ENCODE measurements at regions of chr17 and their contacts with region 1.

Region 1: DNA sequence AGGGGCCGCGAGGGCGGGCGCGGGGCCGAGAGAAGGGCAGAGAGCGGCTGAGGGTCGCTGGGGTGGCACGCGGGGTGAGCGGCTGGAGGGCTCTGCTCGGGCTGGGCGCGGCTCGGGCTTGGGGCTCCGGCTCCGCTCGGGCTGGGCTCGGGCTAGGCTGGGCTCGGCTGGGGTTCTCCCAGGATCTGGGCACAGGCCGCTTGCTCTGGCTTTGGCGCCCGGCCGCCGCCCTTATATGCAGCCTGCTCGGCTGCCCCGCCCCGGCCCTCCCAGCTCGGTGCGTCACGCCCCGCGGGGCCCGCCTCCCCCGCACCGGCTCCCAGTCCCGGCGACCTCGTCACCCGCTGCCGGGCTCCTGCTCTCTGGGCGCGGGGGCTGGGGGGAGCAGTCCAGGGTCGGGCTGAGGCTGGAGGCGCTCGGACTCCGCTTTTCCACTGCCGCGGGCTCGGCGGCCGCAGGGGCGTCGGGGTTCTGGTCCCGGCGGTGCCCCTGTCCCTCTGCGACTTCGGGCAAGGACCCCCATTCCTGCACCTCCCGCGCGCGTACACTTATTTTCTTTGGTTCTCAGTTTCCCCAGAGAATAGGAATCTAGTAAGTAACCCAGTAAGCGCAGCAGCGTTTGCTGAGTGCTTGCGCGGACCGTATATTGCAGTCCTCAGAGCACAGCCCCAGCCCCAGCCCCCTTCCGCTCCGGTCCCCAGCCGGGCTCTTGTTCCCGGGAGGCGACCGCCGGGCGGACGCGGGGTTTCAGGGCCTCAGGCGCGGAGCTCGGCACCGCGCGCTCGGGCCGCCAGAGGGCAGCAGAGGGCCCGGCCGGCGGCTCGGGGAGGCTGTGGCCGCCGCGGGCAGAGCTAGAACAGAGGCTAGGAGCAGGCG is at the start of gene RASD1:
- DNase-seq: peak; percentile 94
- ATAC-seq: peak; percentile 77
- H3K4me3 ChIP-seq: peak within 1 kb of the TSS; percentile 86
- H3K27ac ChIP-seq: peak within 1 kb of the TSS; percentile 9; the same call in 1 of the 2 replicates
- H3K4me1 ChIP-seq: peaks cover 17% of the 10 kb centered on the region
- H3K27me3 ChIP-seq: no peaks in the 10 kb centered on the region
- CTCF ChIP-seq: peak; percentile 92
- total RNA-seq, gene RASD1: 59.0 and 82.6 TPM in 2 replicates

Region 2: GRCh38 chr17:17356149-17356930 is 140.1 kb before region 1 on chr17:
- CTCF ChIA-PET with region 1: interaction called, 5 read pairs
- POLR2A ChIA-PET with region 1: no interaction called
- intact Hi-C with region 1: loop called (anchors 2 kb)
- DNase-seq: peak; percentile 94
- ATAC-seq: peak; percentile 81
- H3K4me3 ChIP-seq: no peak overlapping the region
- H3K27ac ChIP-seq: no peak overlapping the region
- H3K4me1 ChIP-seq: peaks cover 7% of the 10 kb centered on the region; the same call in 1 of the 2 replicates
- H3K27me3 ChIP-seq: no peaks in the 10 kb centered on the region
- CTCF ChIP-seq: peak; percentile 99

Region 3: GRCh38 chr17:17416007-17416399 is 80.4 kb before region 1 on chr17:
- CTCF ChIA-PET with region 1: no interaction called
- POLR2A ChIA-PET with region 1: no interaction called
- intact Hi-C with region 1: loop called (anchors 10 kb)
- DNase-seq: peak; percentile 81
- ATAC-seq: peak; percentile 39
- H3K4me3 ChIP-seq: no peak overlapping the region
- H3K27ac ChIP-seq: peak overlapping the region; percentile 96
- H3K4me1 ChIP-seq: peaks cover 52% of the 10 kb centered on the region
- H3K27me3 ChIP-seq: no peaks in the 10 kb centered on the region
- CTCF ChIP-seq: no peak

Region 4: GRCh38 chr17:17538417-17539391 is 42.3 kb after region 1 on chr17:
- CTCF ChIA-PET with region 1: interaction called, 14 read pairs
- POLR2A ChIA-PET with region 1: no interaction called
- intact Hi-C with region 1: no loop called
- DNase-seq: peak; percentile 96
- ATAC-seq: peak; percentile 91
- H3K4me3 ChIP-seq: no peak overlapping the region
- H3K27ac ChIP-seq: peak overlapping the region; percentile 53
- H3K4me1 ChIP-seq: peaks cover 20% of the 10 kb centered on the region
- H3K27me3 ChIP-seq: no peaks in the 10 kb centered on the region
- CTCF ChIP-seq: no peak

Region 5: DNA sequence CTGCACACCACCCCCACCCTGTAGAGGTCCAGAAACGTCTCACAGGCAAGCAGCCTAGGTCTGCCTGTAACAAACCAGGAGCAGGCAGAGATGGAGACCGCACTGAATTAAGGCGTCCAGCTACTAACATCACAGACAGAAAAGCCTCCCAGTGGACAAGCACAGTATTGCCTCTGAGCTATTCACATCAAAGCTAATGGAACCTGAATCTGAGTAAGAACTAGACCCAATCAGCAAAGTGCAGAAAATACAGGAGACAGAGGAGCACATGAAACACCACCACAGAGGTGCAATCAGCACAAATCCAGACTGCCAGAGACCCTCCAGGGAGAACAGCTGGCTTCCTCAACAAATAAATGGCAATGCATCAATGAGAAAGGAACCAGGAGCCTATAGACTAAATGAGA is 117.3 kb after region 1 on chr17:
- CTCF ChIA-PET with region 1: interaction called, 19 read pairs
- POLR2A ChIA-PET with region 1: interaction called, 3 read pairs
- intact Hi-C with region 1: no loop called
- DNase-seq: peak; percentile 84
- ATAC-seq: peak; percentile 99
- H3K4me3 ChIP-seq: no peak overlapping the region
- H3K27ac ChIP-seq: no peak overlapping the region
- H3K4me1 ChIP-seq: no peaks in the 10 kb centered on the region
- H3K27me3 ChIP-seq: no peaks in the 10 kb centered on the region
- CTCF ChIP-seq: peak; percentile 82